MCF 10A (cell line): ENCODE measurements at regions of chr19 and their contacts with region 1.

Region 1: DNA sequence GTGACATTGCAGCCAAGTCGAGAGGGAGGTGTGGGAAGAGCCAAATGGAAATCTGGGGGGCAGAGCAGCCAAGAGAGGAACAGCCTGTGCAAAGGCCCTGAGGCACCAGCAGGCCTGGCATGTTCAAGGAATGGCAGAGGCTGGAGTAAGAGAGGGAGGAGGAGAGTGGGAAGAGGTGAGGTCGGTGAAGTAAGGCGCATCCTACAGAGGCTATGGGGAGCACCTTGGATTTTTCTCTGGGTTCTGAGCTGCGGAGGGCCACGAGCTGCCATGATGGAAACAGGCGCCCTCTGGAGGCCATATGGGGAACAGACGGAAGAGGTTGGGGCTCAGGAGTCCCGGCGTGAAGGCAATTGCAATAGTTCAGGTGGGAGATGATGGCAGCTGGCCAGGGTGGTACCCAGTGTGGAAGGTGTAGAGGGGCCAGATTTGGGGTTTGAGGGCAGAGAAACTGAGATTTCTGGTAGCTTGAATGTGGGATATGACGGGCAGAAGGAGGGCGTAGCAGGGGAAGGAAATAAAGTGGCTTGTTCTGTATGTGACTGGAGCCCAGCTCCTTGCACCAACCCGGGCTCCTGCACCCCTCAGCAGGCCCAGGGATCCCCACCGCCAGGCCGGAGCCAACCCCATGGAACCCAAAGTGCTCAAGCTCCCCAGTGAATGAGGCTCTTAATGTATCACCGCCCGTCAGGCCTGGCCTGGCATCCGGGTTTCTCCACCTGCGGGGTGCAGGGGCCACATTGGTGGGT is 20.5 kb upstream of the STRN4 start:
- DNase-seq: peak; percentile 62
- H3K4me3 Mint-ChIP-seq: no peak overlapping the region
- H3K27ac Mint-ChIP-seq: no peak overlapping the region
- H3K4me1 Mint-ChIP-seq: no peaks in the 10 kb centered on the region
- H3K27me3 Mint-ChIP-seq: no peaks in the 10 kb centered on the region
- CTCF ChIP-seq: peak; percentile 43

Region 2: GRCh38 chr19:46661020-46661731 is 105.6 kb before region 1 on chr19 and contains the start of gene DACT3:
- CTCF ChIA-PET with region 1: no interaction called
- POLR2A ChIA-PET with region 1: no interaction called
- intact Hi-C with region 1: no loop called
- DNase-seq: peak; percentile 100
- H3K4me3 Mint-ChIP-seq: peak within 1 kb of the TSS; percentile 63
- H3K27ac Mint-ChIP-seq: peak within 1 kb of the TSS; percentile 39
- H3K4me1 Mint-ChIP-seq: peaks cover 7% of the 10 kb centered on the region
- H3K27me3 Mint-ChIP-seq: peaks cover 41% of the 10 kb centered on the region
- CTCF ChIP-seq: no peak
- total RNA-seq, gene DACT3: 0.09 TPM in 1 of 2 replicates, not detected in the other

Region 3: GRCh38 chr19:46753420-46754155 is 13.2 kb before region 1 on chr19:
- CTCF ChIA-PET with region 1: interaction called, 15 read pairs
- POLR2A ChIA-PET with region 1: no interaction called
- intact Hi-C with region 1: no loop called
- DNase-seq: peak; percentile 69
- H3K4me3 Mint-ChIP-seq: no peak overlapping the region
- H3K27ac Mint-ChIP-seq: no peak overlapping the region
- H3K4me1 Mint-ChIP-seq: peaks cover 11% of the 10 kb centered on the region
- H3K27me3 Mint-ChIP-seq: no peaks in the 10 kb centered on the region
- CTCF ChIP-seq: no peak